Vagina (tissue), 2 donors: ENCODE measurements at regions of chr3 and their contacts with region 1.

Region 1: GRCh38 chr3:181174834-181175233 is 185.3 kb upstream of the DNAJC19 start:
- DNase-seq: no peak
- H3K4me3 ChIP-seq: no peak overlapping the region
- H3K27ac ChIP-seq: no peak overlapping the region
- H3K4me1 ChIP-seq: no peaks in the 10 kb centered on the region
- H3K27me3 ChIP-seq: no peaks in the 10 kb centered on the region
- CTCF ChIP-seq: no peak
- POLR2A ChIP-seq: no peak

Region 2: GRCh38 chr3:180594631-180595558 is 579.9 kb before region 1 on chr3:
- intact Hi-C with region 1: loop called (anchors 2 kb)
- DNase-seq: no peak
- H3K4me3 ChIP-seq: no peak overlapping the region
- H3K27ac ChIP-seq: no peak overlapping the region
- H3K4me1 ChIP-seq: no peaks in the 10 kb centered on the region
- H3K27me3 ChIP-seq: no peaks in the 10 kb centered on the region
- CTCF ChIP-seq: peak in 2 of 3 experiments; percentile 9 to 11
- POLR2A ChIP-seq: no peak

Region 3: GRCh38 chr3:181134873-181135272 is 40.0 kb before region 1 on chr3:
- intact Hi-C with region 1: no loop called
- DNase-seq: no peak
- H3K4me3 ChIP-seq: no peak overlapping the region
- H3K27ac ChIP-seq: no peak overlapping the region
- H3K4me1 ChIP-seq: no peaks in the 10 kb centered on the region
- H3K27me3 ChIP-seq: no peaks in the 10 kb centered on the region
- CTCF ChIP-seq: no peak
- POLR2A ChIP-seq: no peak